ENCODE measurements at regions of chr2 and their contacts with region 1.

Region 1: DNA sequence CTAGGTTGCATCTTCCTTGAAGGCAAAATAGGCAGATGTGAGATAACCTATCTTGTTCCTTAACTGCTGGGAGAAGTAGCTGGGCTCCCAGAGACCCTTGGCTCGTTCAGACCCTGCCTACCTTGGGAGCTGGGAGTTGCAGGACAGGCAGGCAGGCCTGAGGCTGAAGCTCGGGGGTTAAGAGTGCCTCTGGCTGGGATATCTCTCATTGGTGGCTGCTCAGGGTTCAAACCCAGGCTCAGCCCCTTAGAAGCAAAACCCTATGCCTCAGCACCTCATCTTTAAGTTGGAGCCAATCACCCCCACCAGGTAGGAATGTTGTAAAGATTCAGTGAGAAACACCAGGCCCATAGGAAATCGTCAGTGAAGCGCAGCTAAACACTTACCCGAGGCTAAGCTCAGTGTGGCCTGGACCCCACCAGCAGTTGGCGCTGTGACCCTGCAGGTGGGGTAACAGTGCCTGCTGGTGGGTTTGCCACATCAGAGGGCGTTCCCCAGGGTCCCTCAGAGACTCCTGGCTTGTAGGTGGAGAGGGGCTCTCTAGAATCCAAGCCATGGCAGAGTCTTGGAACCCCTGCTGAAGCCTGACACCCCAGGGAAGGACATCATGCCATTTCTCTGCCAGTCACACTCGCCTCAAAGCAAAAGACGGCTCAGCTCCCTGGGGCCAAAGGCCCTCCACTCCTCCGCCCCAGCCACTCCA is 54.6 kb upstream of the GPR17 start:
- DNase-seq: peak; percentile 76

Region 2: GRCh38 chr2:127453392-127454171 is 137.8 kb before region 1 on chr2:
- intact Hi-C with region 1: no loop called
- DNase-seq: no peak

Region 3: DNA sequence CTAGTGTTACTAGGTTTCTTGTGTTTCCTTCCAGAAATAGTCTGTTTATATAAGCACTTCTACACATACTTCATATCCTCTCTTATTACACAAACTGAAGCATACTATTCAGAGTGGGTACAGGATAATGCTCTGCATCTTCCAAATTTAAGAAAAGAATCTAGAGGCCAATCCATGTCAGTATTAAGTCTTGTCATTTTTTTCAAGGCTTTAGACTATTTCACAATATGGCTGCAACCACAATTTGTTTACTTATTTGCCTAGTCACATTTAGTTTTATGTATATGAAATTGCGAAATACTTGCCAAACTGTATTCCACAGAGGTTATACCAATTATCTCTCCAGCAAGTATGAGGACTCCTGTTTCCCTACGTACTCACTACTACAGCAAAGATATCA is 93.0 kb before region 1 on chr2:
- intact Hi-C with region 1: no loop called
- DNase-seq: no peak

Region 4: GRCh38 chr2:127694986-127695385 is 103.6 kb after region 1 on chr2:
- intact Hi-C with region 1: loop called (anchors 5 kb)
- DNase-seq: no peak

Region 5: DNA sequence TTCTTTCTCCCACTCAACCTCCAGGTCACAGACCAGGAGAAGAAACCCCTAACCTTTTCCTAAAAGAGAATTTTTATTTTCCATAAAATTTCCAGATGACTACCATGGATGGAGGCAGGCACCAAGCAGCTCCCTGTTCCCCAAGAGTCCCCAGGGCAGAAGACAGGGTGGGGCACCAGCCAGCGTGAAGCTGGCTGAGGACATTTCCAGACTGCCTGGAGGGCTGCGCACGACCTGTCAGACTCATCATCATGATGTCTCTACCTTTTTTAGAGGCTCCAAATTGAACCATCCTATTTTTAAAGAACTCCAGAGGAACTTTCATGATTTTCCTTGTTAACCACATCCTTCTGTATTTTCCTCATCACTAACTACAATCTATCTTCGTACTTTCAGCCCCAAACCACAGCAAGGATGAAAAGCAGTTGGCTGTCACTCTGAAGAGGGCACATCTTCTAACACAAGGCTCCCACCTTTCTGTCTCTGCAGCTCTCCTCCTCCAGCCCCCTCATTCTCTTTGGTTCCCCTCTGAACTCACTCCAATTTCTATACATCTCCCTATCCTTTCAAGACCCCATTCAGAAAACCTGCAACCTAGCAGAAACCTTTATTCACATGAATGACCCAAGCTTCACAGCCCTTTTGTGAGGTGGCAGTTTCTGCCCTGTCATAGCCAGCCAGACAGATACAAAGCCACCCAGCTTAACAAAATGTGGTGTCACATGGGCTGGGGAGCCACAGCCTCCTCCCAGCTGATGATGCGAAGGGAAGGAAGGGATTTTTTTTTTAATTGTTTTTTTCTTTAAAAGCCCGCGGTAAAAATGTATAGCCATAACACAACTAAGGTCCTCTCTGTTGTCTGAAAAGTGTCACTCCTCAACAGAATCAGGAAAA is 283.3 kb after region 1 on chr2:
- intact Hi-C with region 1: loop called (anchors 5 kb)
- DNase-seq: no peak